CD8-positive, alpha-beta memory T cell (primary cell): ENCODE measurements at regions of chr11 and their contacts with region 1.

Region 1: DNA sequence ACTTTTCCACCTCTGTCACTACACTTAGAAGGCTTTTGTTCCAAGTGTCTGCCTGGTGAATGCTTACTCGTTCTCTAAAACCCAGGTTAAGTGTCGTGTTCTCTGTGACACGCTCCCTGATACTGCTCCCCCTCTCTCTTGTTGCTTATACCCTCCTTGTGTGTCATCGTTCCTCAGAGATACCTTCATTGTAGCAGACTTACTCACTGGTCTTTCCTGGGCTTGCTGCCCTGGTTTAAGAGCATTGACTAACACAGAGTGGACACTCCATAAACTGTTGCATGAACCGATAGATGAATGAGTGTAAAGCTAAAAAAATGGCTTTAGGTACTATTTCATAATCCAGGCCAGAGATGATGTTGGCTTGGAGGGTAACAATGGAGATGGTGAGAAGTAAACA is 171.3 kb downstream of the GRIK4 start:
- DNase-seq: no peak
- H3K4me3 ChIP-seq: no peak overlapping the region
- H3K4me3 Mint-ChIP-seq: no peak overlapping the region
- H3K27ac ChIP-seq: no peak overlapping the region
- H3K27ac Mint-ChIP-seq: no peak overlapping the region
- H3K4me1 ChIP-seq: no peaks in the 10 kb centered on the region
- H3K4me1 Mint-ChIP-seq: peaks cover 0 to under 1% (median 0%) of the 10 kb centered on the region in 3 donors
- H3K27me3 ChIP-seq: no peaks in the 10 kb centered on the region
- H3K27me3 Mint-ChIP-seq: peaks cover 15 to 21% of the 10 kb centered on the region in 2 donors

Region 2: GRCh38 chr11:120335908-120336640 is 346.8 kb before region 1 on chr11 and contains the start of gene ARHGEF12:
- CTCF ChIA-PET with region 1: interaction called, 46 read pairs
- POLR2A ChIA-PET with region 1: interaction called, 5 read pairs
- DNase-seq: peak; percentile 43 to 79 (median 60)
- H3K4me3 ChIP-seq: peak within 1 kb of the TSS; percentile 78
- H3K4me3 Mint-ChIP-seq: peak within 1 kb of the TSS; percentile 90 to 95 (median 92)
- H3K27ac ChIP-seq: peak within 1 kb of the TSS; percentile 64
- H3K27ac Mint-ChIP-seq: peak within 1 kb of the TSS in 7 of 8 donors; percentile 31 to 94 (median 78)
- H3K4me1 ChIP-seq: peaks cover 25% of the 10 kb centered on the region
- H3K4me1 Mint-ChIP-seq: peaks cover 26 to 47% (median 43%) of the 10 kb centered on the region in 3 donors
- H3K27me3 ChIP-seq: peaks cover 24% of the 10 kb centered on the region
- H3K27me3 Mint-ChIP-seq: peaks cover 16 to 46% of the 10 kb centered on the region in 2 donors
- total RNA-seq, gene ARHGEF12: 30.1 to 31.0 TPM

Region 3: GRCh38 chr11:120668537-120668936 is 14.3 kb before region 1 on chr11:
- CTCF ChIA-PET with region 1: no interaction called
- POLR2A ChIA-PET with region 1: no interaction called
- DNase-seq: no peak
- H3K4me3 ChIP-seq: no peak overlapping the region
- H3K4me3 Mint-ChIP-seq: no peak overlapping the region
- H3K27ac ChIP-seq: no peak overlapping the region
- H3K27ac Mint-ChIP-seq: no peak overlapping the region
- H3K4me1 ChIP-seq: no peaks in the 10 kb centered on the region
- H3K4me1 Mint-ChIP-seq: no peaks in the 10 kb centered on the region
- H3K27me3 ChIP-seq: no peaks in the 10 kb centered on the region
- H3K27me3 Mint-ChIP-seq: peaks cover 4 to 17% of the 10 kb centered on the region in 2 donors